ENCODE measurements at regions of chr17 and their contacts with region 1.

Region 1: GRCh38 chr17:44775136-44775837 is 16.5 kb downstream of the ADAM11 start:
- H3K4me3 Mint-ChIP-seq: peak overlapping the region; percentile 79
- H3K27ac Mint-ChIP-seq: peak overlapping the region; percentile 20
- H3K4me1 Mint-ChIP-seq: peaks cover 39% of the 10 kb centered on the region
- H3K27me3 Mint-ChIP-seq: peaks cover 79% of the 10 kb centered on the region

Region 2: GRCh38 chr17:44722254-44722653 is 53.0 kb before region 1 on chr17:
- intact Hi-C with region 1: no loop called
- H3K4me3 Mint-ChIP-seq: no peak overlapping the region
- H3K27ac Mint-ChIP-seq: no peak overlapping the region
- H3K4me1 Mint-ChIP-seq: no peaks in the 10 kb centered on the region
- H3K27me3 Mint-ChIP-seq: no peaks in the 10 kb centered on the region

Region 3: DNA sequence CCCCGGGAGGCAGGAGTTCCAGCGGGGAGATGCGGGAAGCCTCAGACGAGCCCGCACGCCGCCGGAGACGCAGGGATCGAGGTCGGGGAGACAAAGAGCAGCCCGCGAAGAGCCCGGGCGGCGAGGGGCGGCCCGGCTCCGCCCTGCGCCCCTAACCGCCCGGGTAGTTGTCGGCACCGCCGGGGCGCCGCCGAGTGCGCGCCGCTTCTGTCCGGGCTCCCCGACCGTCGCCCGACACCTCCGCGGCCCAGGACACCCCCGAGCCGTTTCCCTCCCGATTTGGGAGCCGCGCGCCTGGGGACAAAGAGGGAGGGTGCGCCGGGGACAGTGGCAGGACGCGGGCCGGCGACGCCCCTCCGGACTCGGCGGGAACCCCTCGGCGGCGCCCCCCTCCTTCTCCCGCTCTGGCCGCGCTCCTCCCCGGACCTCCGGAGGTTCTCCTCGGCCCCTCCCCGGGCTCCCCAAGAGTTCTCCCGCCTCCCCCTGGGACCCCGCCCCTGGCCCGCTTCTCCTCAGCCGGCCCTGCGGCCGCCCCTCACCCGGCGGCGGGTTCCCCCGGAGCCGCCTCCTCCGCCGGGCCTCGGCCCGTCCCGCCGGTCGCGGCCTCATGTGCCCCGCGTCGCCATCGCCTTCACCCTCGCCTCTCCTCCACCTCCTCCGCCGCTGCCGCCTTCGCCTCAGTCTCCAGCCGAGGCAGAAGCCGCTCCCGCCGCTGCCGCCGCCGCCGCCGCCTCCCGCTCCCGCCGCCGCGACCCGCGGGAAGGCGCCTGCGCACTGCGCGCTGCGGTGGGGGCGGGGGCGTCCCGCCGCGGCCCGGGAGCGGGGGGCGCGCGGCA is 54.5 kb after region 1 on chr17 and contains the start of gene GJC1:
- intact Hi-C with region 1: loop called (anchors 5 kb)
- H3K4me3 Mint-ChIP-seq: peak within 1 kb of the TSS; percentile 70
- H3K27ac Mint-ChIP-seq: no peak within 1 kb of the TSS
- H3K4me1 Mint-ChIP-seq: peaks cover 15% of the 10 kb centered on the region
- H3K27me3 Mint-ChIP-seq: peaks cover 90% of the 10 kb centered on the region

Region 4: GRCh38 chr17:44864866-44865660 is 89.8 kb after region 1 on chr17:
- intact Hi-C with region 1: loop called (anchors 1 kb)
- H3K4me3 Mint-ChIP-seq: no peak overlapping the region
- H3K27ac Mint-ChIP-seq: no peak overlapping the region
- H3K4me1 Mint-ChIP-seq: no peaks in the 10 kb centered on the region
- H3K27me3 Mint-ChIP-seq: no peaks in the 10 kb centered on the region

Region 5: GRCh38 chr17:44924107-44924544 is 148.8 kb after region 1 on chr17:
- intact Hi-C with region 1: no loop called
- H3K4me3 Mint-ChIP-seq: no peak overlapping the region
- H3K27ac Mint-ChIP-seq: no peak overlapping the region
- H3K4me1 Mint-ChIP-seq: no peaks in the 10 kb centered on the region
- H3K27me3 Mint-ChIP-seq: peaks cover 29% of the 10 kb centered on the region

Region 6: DNA sequence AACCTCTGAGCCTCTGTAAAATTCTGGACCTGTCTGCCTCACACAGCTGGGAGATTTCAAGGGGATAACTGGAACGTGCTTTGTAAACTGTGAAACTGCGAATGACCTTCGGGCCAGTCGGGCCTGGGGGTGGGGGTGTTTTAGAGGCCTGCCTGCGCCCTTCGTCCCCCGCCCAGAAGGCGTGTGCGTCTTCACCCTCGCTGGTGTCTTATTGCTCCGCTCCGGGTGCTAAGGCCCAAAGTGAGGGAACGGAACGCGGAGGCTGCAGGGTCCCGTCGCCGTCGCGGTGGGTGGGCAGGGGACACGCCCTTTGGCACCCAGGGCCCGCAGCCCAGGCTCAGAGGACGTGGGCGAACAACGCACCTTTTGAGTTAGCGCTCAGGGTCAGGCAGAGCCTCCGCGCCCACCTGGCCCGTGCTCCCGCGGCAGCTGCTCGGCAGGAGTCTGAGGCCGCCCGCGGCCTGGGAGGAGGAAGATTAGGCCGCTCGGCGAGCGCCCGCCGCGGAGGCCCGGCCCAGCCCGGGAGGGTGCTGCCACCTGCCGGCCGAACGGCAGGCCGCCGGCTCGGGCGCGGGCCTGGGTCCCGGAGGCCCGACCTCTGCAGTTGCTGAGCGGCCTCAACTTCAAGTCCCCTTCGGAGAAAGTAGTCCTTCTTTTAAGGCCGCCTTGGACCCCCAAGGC is 246.5 kb after region 1 on chr17:
- intact Hi-C with region 1: loop called (anchors 5 kb)
- H3K4me3 Mint-ChIP-seq: peak overlapping the region; percentile 69
- H3K27ac Mint-ChIP-seq: peak overlapping the region; percentile 46
- H3K4me1 Mint-ChIP-seq: peaks cover 35% of the 10 kb centered on the region
- H3K27me3 Mint-ChIP-seq: peaks cover 43% of the 10 kb centered on the region

Measured in dendritic cell treated with granulocyte-macrophage colony-stimulating factor and Interleukin-4, amounts not matched to agents 40 ng/mL and 50 ng/mL, for 4 days (primary cell).